Uterus (tissue), 4 donors: ENCODE measurements at regions of chr4 and their contacts with region 1.

Region 1: GRCh38 chr4:99117876-99118693 is 26.0 kb downstream of the ADH4 start:
- DNase-seq: no peak
- H3K4me3 ChIP-seq: no peak overlapping the region
- H3K27ac ChIP-seq: peak overlapping the region; percentile 11 to 59
- H3K4me1 ChIP-seq: no peaks in the 10 kb centered on the region
- H3K27me3 ChIP-seq: no peaks in the 10 kb centered on the region
- CTCF ChIP-seq: peak in 2 of 4 experiments; percentile 38 to 53
- POLR2A ChIP-seq: no peak

Region 2: DNA sequence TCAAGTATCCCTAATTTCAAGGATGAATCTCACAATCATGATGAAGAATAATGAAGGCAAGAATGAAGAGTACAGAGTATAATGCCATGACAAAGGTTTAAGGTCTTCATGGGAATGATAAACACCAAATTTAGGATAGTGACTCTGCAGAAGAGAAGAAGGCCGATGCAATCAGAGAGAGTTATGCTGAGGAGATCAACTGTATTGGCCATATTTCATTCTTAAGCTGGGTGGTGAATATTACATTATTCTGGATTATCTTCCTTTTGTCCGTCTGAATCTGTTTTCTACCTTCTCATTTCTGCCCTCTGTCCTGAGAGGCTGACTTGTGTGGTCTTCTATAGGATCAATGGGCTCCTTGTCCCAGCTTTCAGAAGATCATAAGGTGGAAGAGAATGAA is 130.4 kb before region 1 on chr4:
- intact Hi-C with region 1: no loop called
- DNase-seq: no peak
- H3K4me3 ChIP-seq: no peak overlapping the region
- H3K27ac ChIP-seq: no peak overlapping the region
- H3K4me1 ChIP-seq: no peaks in the 10 kb centered on the region
- H3K27me3 ChIP-seq: no peaks in the 10 kb centered on the region
- CTCF ChIP-seq: no peak
- POLR2A ChIP-seq: no peak

Region 3: GRCh38 chr4:99405433-99406115 is 287.5 kb after region 1 on chr4:
- intact Hi-C with region 1: loop called (anchors 5 kb)
- DNase-seq: peak; percentile 80 to 83
- H3K4me3 ChIP-seq: no peak overlapping the region
- H3K27ac ChIP-seq: peak overlapping the region; percentile 70 to 73
- H3K4me1 ChIP-seq: peaks cover 0 to 7% of the 10 kb centered on the region in 2 donors
- H3K27me3 ChIP-seq: no peaks in the 10 kb centered on the region
- CTCF ChIP-seq: peak; percentile 92 to 98 (median 96)
- POLR2A ChIP-seq: no peak

Region 4: DNA sequence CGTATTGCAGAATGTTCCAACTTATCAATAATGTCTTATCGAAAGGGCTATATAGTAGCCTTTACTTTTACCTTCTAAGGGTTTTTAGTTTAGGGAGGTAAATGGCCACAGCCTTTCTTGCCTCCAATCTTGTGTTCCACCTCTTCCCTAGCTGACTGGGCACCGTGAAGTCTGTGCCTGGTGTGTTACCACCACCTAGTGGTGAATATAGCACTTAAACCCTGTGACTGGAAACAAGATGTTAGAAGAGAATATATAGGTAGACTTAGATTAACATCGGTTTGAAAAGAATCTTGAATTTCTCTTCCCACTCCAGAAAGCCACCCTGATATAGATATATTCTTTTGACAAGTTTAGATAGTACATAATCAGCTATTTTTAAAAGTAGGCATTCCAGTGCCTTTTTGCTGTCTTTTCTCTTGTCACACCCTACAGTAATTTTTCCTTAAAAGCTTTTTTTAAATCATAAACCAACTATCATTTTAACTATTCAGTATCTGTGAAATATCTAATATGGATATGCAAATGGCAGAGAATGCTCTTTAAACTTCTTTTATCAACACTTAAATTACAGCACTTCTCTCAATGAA is 344.9 kb after region 1 on chr4:
- intact Hi-C with region 1: loop called (anchors 5 kb)
- DNase-seq: peak; percentile 39 to 65
- H3K4me3 ChIP-seq: no peak overlapping the region
- H3K27ac ChIP-seq: no peak overlapping the region
- H3K4me1 ChIP-seq: no peaks in the 10 kb centered on the region
- H3K27me3 ChIP-seq: no peaks in the 10 kb centered on the region
- CTCF ChIP-seq: peak; percentile 73 to 85 (median 79)
- POLR2A ChIP-seq: no peak